ENCODE measurements at regions of chr17 and their contacts with region 1.

Region 1: DNA sequence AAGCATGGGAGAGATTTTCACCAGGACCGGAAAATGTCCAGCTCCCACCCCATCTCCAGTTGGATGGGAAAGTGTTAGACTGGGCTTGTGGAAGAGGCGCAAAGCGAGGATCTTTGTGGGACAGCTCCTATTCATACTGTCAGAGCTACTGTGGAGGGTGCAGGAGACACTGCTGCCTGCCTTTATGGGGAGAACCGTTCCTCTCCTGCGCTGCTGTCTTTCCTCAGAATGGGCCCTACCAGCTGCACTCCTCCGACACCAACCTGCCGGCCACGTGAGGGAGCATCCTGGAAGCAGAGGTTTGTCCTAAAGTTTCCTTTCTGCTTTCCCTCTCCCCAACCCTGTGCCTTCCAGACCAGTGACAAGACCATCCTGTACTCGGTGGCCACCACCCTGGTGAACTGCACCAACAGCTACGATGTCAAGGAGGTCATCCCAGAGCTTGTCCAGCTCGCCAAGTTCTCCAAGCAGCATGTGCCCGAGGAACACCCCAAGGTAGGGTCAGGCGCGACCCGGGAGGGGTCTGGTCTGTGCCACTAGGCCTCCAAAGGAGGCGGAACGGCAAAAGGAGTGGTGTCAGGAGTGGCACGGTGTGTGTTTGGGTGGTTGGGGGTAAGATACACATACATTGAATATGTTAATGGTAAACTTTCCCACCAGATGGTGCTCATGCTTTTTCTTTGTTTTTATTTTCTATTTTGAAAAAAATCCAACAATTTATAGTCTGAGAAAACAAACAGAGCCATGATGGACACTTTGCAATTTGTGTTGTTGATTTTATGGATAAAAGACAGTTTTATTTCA is 23.0 kb downstream of the SLC35G3 start:
- DNase-seq: peak; percentile 64
- ATAC-seq: peak; percentile 70
- H3K4me3 ChIP-seq: no peak overlapping the region
- H3K27ac ChIP-seq: no peak overlapping the region
- H3K4me1 ChIP-seq: peaks cover 9% of the 10 kb centered on the region
- H3K27me3 ChIP-seq: no peaks in the 10 kb centered on the region
- CTCF ChIP-seq: peak; percentile 60

Region 2: DNA sequence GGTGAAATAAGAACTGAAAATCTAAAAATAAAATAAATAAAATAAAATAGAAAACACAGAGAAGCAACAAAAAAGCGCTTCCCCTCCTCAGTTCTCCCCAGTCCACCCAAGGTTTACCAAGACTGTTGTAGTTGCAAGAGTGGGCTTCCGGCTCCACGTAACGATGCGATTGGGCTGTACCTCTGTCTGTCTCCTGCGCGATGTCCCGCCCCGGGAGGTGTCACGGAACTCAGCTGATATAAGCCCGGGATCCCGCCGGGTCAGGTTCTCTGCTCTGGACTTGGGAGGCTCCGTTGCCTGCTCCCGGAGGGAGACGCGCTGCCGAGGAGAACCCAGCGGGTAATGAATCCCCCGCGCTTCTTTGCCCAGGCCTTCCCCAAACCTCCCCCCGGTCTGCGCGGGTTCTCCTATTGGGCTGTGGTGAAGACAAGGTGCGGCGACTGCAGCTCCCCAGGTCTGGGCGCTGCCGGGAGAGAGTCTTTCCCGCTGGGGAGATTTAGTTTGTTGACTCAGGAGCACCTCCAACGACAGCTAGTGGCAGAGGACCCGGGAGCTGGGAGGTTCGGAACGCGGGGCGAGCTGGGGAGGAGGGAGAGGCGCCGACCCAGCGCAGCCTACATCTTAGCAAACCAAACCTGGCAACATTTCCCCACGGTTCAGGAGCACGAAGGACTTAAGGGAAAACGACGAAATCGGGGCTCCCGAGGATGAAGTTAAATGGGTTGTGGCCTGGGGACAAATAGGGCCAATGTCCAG is 71.8 kb after region 1 on chr17 and contains the start of gene SLFN5:
- CTCF ChIA-PET with region 1: no interaction called
- POLR2A ChIA-PET with region 1: no interaction called
- intact Hi-C with region 1: loop called (anchors 5 kb)
- DNase-seq: peak; percentile 83
- ATAC-seq: peak; percentile 74
- H3K4me3 ChIP-seq: peak within 1 kb of the TSS; percentile 88
- H3K27ac ChIP-seq: peak within 1 kb of the TSS; percentile 98
- H3K4me1 ChIP-seq: peaks cover 40% of the 10 kb centered on the region
- H3K27me3 ChIP-seq: no peaks in the 10 kb centered on the region
- CTCF ChIP-seq: no peak
- total RNA-seq, gene SLFN5: 7.5 and 14.5 TPM in 2 replicates

Region 3: GRCh38 chr17:35312790-35313711 is 141.9 kb after region 1 on chr17:
- CTCF ChIA-PET with region 1: no interaction called
- POLR2A ChIA-PET with region 1: no interaction called
- intact Hi-C with region 1: loop called (anchors 2 kb)
- DNase-seq: peak; percentile 57
- ATAC-seq: peak; percentile 87
- H3K4me3 ChIP-seq: no peak overlapping the region
- H3K27ac ChIP-seq: no peak overlapping the region
- H3K4me1 ChIP-seq: peaks cover 17% of the 10 kb centered on the region; the same call in 1 of the 2 replicates
- H3K27me3 ChIP-seq: no peaks in the 10 kb centered on the region
- CTCF ChIP-seq: peak; percentile 75

Region 4: DNA sequence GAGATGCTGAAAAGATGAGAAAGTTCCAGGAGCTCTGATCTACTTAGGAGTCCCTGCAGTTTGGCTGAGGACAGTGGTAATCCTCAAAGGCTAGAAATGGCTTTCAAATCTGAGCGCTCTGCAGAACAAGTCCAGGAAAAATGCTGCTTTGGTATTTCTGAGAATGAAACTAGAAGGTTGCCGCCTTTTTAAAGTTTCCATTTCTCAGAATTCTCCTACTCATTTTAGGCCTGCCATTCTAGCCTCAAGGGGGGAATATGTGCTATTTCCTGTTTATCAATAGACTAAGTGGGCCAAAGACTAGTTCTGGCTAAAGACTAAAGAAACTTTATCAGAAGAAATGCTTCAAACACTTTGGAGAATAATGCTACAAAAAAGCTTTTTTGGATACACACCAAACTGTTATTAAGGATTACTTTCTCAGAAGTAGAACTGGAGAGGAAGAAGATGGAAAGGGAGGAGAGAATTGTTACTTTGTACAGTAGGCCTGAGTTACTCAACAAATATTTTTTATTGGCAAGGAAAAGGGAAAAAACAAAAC is 366.5 kb after region 1 on chr17 and contains the start of gene SLFN12L:
- CTCF ChIA-PET with region 1: no interaction called
- POLR2A ChIA-PET with region 1: no interaction called
- intact Hi-C with region 1: loop called (anchors 1 kb)
- DNase-seq: no peak
- ATAC-seq: no peak
- H3K4me3 ChIP-seq: no peak within 1 kb of the TSS
- H3K27ac ChIP-seq: no peak within 1 kb of the TSS
- H3K4me1 ChIP-seq: peaks cover 4% of the 10 kb centered on the region; the same call in 1 of the 2 replicates
- H3K27me3 ChIP-seq: no peaks in the 10 kb centered on the region
- CTCF ChIP-seq: no peak
- total RNA-seq, gene SLFN12L: not detected in 2 replicates